Dendritic cell treated with granulocyte-macrophage colony-stimulating factor and Interleukin-4, amounts not matched to agents 40 ng/mL and 50 ng/mL, for 4 days (primary cell): ENCODE measurements at regions of chr20 and their contacts with region 1.

Region 1: DNA sequence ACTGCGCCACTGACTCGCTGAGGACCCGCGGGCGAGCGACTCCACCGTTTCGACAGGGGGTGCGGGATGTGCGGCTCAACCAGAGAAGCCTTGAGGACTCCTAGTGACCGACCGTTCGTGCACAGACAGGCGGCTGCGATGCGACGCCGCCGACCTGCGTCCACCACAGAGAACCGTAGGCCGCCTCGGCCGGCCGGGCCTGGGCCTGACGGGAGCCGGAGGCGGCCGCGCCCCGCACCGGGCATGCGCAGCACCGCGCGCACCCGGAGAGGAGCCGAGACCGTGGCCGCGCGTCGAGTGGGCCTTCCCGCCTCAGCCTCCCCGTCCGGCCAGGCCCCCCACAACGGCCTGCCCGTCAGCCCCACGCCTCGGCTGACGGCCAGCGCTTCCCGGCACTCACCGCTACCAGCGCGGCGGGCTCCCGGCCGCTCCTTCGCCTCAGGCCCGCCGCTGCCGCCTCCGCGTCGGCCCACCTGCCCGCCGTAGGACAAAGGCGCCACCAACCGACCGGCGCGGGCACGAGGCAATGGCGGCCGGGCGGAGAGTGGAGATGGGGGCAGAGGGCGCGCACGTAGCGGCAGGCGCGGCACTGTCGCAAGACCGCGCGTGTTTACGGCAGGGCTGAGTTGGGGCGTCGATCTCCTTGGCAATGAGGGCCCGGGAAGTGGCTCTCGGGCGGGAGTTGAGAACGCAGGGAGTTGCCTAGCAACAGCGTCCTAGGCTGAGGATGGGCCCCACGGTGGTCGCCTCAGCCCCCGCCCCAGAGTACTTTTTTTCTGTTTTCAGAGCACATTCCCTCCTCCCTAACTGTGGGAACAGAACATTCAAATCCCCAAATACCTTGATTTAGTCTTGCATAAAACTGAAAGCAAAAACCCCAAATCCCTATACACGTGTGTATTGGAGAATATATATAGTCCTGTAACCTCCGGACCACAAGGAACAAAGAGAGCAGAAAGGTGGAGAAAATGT is at the start of gene NCOA5:
- H3K4me3 Mint-ChIP-seq: peak within 1 kb of the TSS; percentile 90
- H3K27ac Mint-ChIP-seq: peak within 1 kb of the TSS; percentile 96
- H3K4me1 Mint-ChIP-seq: peaks cover 38% of the 10 kb centered on the region
- H3K27me3 Mint-ChIP-seq: peaks cover 6% of the 10 kb centered on the region

Region 2: DNA sequence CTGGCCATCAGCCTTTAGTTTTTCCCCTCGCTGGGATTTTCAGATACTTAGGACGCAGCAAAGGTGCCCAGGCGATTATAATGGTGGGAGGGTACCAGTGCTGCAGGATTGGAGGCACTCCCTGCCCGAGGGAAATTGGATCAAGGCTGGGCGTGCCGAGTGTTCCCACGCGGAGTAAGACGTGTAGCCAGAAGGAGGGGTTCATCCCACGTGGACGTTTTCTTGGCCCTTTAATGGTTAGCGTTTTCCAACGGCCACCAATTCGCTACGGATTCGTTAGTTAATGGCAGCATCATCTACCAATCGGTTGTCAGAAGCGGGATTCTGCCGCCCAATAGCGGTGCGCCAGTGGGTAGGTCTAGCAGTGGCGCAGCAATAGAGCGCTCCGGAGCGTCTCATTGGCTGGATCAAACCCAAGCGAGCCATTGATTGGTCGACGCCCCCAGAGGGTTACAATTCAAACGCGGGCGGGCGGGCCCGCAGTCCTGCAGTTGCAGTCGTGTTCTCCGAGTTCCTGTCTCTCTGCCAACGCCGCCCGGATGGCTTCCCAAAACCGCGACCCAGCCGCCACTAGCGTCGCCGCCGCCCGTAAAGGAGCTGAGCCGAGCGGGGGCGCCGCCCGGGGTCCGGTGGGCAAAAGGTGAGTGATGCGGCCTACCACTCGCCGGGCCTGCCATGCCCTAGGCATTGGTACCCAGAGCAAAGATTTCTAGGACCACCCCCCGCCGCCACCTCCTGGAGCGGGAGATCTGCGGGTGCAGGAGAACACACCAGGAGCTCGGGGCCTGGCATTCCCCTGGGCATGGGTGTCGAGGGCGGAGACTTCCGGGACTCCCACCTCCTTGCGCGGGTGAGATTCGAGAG is 277.3 kb before region 1 on chr20 and contains the start of gene UBE2C:
- intact Hi-C with region 1: no loop called
- H3K4me3 Mint-ChIP-seq: peak within 1 kb of the TSS; percentile 83
- H3K27ac Mint-ChIP-seq: peak within 1 kb of the TSS; percentile 39
- H3K4me1 Mint-ChIP-seq: peaks cover 18% of the 10 kb centered on the region
- H3K27me3 Mint-ChIP-seq: no peaks in the 10 kb centered on the region

Region 3: GRCh38 chr20:45946149-45946970 is 143.3 kb before region 1 on chr20:
- intact Hi-C with region 1: no loop called
- H3K4me3 Mint-ChIP-seq: no peak overlapping the region
- H3K27ac Mint-ChIP-seq: peak overlapping the region; percentile 82
- H3K4me1 Mint-ChIP-seq: peaks cover 33% of the 10 kb centered on the region
- H3K27me3 Mint-ChIP-seq: no peaks in the 10 kb centered on the region

Region 4: DNA sequence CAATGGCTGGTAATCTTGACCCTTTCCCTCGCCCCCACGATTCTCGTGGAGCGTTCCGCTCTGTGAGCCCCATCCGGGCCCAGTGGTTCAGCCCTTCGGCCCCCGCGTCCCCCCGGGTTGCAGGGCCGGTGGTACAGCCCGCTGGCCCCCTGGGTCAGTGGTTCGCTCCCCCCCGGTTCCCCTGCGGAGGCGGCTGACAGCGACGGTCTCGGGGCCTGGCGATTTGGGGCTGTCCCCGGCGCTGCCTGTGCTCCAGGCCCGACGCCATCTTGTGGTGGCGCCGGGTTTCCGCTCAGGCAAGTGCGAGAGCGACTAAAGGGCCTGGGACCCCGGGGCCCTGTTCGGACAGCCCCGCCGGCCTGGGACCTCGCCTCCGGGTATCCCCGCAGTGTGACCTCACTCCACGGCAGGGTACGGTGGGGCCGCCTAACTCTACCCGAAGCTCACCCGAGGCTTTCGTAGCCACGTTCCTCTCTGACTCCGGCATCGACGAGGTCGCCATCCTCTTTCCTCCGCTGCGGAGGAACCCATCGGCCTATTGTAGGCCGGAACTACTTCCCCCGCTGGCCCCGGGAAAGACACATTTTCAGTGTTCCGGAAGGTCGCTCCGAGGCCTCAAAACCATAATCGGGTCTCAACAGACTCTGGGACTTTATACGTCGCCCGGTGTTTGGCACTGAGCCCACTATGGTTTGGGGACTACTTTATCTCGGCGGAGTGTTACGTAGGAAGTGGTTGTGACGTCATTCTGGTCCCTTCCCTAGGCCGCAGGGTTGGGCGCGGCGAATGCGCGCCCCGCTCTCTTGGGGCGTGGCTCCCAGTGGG is 117.8 kb before region 1 on chr20 and contains the start of gene ZNF335:
- intact Hi-C with region 1: loop called (anchors 5 kb)
- H3K4me3 Mint-ChIP-seq: peak within 1 kb of the TSS; percentile 83
- H3K27ac Mint-ChIP-seq: peak within 1 kb of the TSS; percentile 95
- H3K4me1 Mint-ChIP-seq: peaks cover 49% of the 10 kb centered on the region
- H3K27me3 Mint-ChIP-seq: no peaks in the 10 kb centered on the region

Region 5: DNA sequence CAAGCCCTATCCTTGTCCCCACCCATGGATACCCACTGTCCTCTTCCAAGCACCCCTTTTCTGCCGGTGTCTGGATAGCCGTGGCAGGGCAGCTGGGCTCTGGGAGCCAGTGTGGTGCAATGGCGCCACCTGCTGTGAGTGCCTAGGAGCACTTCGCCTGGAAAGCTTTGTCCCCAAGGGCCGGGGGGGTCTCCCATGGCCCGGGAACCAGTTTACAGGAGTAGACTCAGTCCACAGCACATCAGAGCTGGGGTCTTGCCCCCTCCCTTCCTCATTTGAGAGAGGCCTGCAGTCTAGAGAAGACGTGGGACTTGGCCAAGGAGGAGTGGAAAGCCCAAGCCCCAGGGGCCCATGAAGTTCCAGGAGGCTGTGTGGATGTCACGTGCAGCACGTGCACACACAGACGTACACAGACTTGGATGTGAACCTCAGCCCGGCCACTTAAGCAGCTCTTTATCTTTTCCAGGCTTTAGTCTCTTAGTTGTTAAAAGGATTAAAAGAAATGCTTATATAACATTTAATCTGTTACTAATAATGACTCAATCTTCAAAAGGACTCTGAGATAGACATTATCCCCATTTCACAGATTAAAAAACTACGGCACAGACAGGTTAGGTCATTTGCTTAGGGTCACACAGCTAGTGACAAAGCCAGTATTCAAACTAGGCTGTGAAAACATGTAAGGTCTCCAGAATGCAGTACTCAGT is 259.5 kb after region 1 on chr20:
- intact Hi-C with region 1: no loop called
- H3K4me3 Mint-ChIP-seq: no peak overlapping the region
- H3K27ac Mint-ChIP-seq: no peak overlapping the region
- H3K4me1 Mint-ChIP-seq: peaks cover 54% of the 10 kb centered on the region
- H3K27me3 Mint-ChIP-seq: peaks cover 9% of the 10 kb centered on the region